MCF 10A (cell line): ENCODE measurements at regions of chr4 and their contacts with region 1.

Region 1: GRCh38 chr4:183142571-183143550 is 43.8 kb downstream of the WWC2 start:
- DNase-seq: peak; percentile 95
- H3K4me3 Mint-ChIP-seq: peak overlapping the region; percentile 42
- H3K27ac Mint-ChIP-seq: peak overlapping the region; percentile 69
- H3K4me1 Mint-ChIP-seq: peaks cover 36% of the 10 kb centered on the region
- H3K27me3 Mint-ChIP-seq: no peaks in the 10 kb centered on the region
- CTCF ChIP-seq: no peak

Region 2: GRCh38 chr4:183118585-183118984 is 24.3 kb before region 1 on chr4:
- CTCF ChIA-PET with region 1: interaction called, 10 read pairs
- POLR2A ChIA-PET with region 1: interaction called, 3 read pairs
- intact Hi-C with region 1: no loop called
- DNase-seq: peak; percentile 57
- H3K4me3 Mint-ChIP-seq: peak overlapping the region; percentile 21
- H3K27ac Mint-ChIP-seq: peak overlapping the region; percentile 80
- H3K4me1 Mint-ChIP-seq: peaks cover 28% of the 10 kb centered on the region
- H3K27me3 Mint-ChIP-seq: no peaks in the 10 kb centered on the region
- CTCF ChIP-seq: no peak

Region 3: DNA sequence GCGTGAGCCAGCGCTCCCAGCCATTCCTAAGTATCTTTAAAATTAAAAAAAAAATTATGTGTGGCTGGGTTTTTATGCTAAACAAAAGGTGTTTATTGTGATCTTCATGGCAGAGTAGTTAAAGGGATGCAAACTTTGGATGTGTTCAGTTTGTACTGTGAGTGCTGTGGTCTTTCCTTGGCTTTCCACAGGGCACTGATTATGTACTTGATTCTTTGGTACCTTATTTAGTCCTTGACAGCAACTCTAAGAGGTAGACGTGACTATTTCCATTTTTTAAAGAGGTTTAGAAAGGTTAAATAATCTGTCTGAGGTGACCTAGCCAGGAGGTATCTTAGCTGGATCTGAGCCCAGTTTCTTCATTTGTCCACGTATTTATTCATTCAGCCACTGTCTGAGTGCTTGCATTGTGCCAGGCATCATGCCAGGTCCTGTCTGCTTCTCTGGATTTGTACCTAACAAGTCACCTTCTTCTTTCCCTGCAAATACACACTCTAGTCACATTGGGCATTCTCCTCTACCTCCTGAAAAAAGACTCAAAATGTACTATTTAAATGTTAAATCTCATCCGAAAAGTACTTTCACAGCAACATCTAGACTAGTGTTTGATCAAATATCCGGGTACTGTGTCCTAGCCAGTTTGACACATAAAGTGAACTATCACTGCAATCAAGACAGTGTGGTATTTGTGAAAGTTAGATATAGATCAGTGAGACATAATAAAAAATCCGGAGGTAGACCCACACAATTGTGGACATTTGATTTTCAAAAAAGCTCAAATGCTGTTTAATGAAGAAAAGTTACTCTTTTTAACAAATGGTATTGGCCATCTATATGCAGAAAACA is 12.3 kb before region 1 on chr4:
- CTCF ChIA-PET with region 1: interaction called, 6 read pairs
- POLR2A ChIA-PET with region 1: interaction called, 10 read pairs
- intact Hi-C with region 1: no loop called
- DNase-seq: peak; percentile 87
- H3K4me3 Mint-ChIP-seq: peak overlapping the region; percentile 33
- H3K27ac Mint-ChIP-seq: peak overlapping the region; percentile 33
- H3K4me1 Mint-ChIP-seq: peaks cover 47% of the 10 kb centered on the region
- H3K27me3 Mint-ChIP-seq: no peaks in the 10 kb centered on the region
- CTCF ChIP-seq: no peak